MCF 10A (cell line): ENCODE measurements at regions of chr14 and their contacts with region 1.

Region 1: DNA sequence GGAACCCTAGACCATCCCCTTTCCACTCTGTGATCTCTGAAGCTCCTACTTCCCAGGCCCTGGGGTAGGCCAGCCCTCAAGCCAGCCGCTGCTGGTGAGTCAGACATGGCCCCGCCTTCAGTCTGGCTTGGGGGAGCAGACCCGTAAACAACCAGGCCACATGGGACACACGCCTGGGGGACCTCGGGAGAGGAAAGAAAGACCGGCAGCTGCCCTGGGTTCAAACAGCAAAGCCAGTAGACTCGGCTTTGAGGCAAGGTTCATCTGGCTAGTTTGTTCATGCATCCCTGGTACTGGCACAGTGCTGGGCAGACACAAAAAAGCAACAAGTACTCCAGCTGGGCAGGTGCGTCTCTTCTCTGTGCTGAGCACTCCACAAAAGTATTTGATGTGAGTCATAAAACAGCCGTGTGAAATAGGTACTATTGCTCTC is 101.9 kb downstream of the SETD3 start:
- DNase-seq: peak; percentile 72
- H3K4me3 Mint-ChIP-seq: no peak overlapping the region
- H3K27ac Mint-ChIP-seq: no peak overlapping the region
- H3K4me1 Mint-ChIP-seq: peaks cover 26% of the 10 kb centered on the region
- H3K27me3 Mint-ChIP-seq: no peaks in the 10 kb centered on the region
- CTCF ChIP-seq: no peak

Region 2: GRCh38 chr14:98489115-98489514 is 889.7 kb before region 1 on chr14:
- CTCF ChIA-PET with region 1: no interaction called
- POLR2A ChIA-PET with region 1: no interaction called
- intact Hi-C with region 1: no loop called
- DNase-seq: peak; percentile 45
- H3K4me3 Mint-ChIP-seq: no peak overlapping the region
- H3K27ac Mint-ChIP-seq: peak overlapping the region; percentile 46
- H3K4me1 Mint-ChIP-seq: peaks cover 15% of the 10 kb centered on the region
- H3K27me3 Mint-ChIP-seq: no peaks in the 10 kb centered on the region
- CTCF ChIP-seq: no peak

Region 3: GRCh38 chr14:99320105-99320572 is 58.7 kb before region 1 on chr14:
- CTCF ChIA-PET with region 1: interaction called, 13 read pairs
- POLR2A ChIA-PET with region 1: no interaction called
- intact Hi-C with region 1: no loop called
- DNase-seq: peak; percentile 65
- H3K4me3 Mint-ChIP-seq: no peak overlapping the region
- H3K27ac Mint-ChIP-seq: no peak overlapping the region
- H3K4me1 Mint-ChIP-seq: peaks cover 6% of the 10 kb centered on the region
- H3K27me3 Mint-ChIP-seq: no peaks in the 10 kb centered on the region
- CTCF ChIP-seq: peak; percentile 89

Region 4: GRCh38 chr14:99357916-99358390 is 20.8 kb before region 1 on chr14:
- CTCF ChIA-PET with region 1: no interaction called
- POLR2A ChIA-PET with region 1: no interaction called
- intact Hi-C with region 1: no loop called
- DNase-seq: no peak
- H3K4me3 Mint-ChIP-seq: no peak overlapping the region
- H3K27ac Mint-ChIP-seq: no peak overlapping the region
- H3K4me1 Mint-ChIP-seq: no peaks in the 10 kb centered on the region
- H3K27me3 Mint-ChIP-seq: no peaks in the 10 kb centered on the region
- CTCF ChIP-seq: no peak

Region 5: DNA sequence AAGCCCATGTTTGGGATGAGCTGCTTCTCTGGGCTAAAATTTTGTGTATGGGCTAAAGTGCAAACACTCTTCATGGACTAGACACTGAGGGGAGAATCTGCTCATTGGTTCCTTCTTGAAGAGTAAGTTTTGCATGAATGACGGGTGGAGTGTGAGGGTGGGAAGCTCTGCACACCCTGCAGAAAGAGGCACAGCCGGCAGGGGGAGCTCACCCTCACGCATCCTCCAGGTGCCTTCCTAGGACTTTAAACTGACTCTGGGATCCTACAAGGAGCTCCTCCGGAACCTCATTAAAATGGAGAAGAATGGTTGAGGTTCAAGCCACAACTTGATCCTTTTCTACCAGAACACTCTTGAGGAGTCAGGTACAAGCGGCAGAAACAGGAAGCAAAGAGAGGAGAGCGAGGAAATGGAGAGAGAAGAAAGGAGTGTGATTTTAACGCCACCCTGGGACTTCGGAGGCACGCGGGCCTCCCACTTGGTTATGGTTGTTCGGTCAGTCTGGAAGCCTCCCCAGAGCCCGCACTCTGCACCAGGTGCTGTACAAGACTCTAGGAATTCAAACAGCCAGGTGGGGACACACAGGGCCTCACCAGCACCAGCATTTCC is 14.4 kb after region 1 on chr14:
- CTCF ChIA-PET with region 1: interaction called, 29 read pairs
- POLR2A ChIA-PET with region 1: interaction called, 4 read pairs
- intact Hi-C with region 1: no loop called
- DNase-seq: peak; percentile 54
- H3K4me3 Mint-ChIP-seq: no peak overlapping the region
- H3K27ac Mint-ChIP-seq: no peak overlapping the region
- H3K4me1 Mint-ChIP-seq: no peaks in the 10 kb centered on the region
- H3K27me3 Mint-ChIP-seq: no peaks in the 10 kb centered on the region
- CTCF ChIP-seq: peak; percentile 59

Region 6: GRCh38 chr14:99475179-99475578 is 96.4 kb after region 1 on chr14:
- CTCF ChIA-PET with region 1: no interaction called
- POLR2A ChIA-PET with region 1: no interaction called
- intact Hi-C with region 1: no loop called
- DNase-seq: no peak
- H3K4me3 Mint-ChIP-seq: no peak overlapping the region
- H3K27ac Mint-ChIP-seq: no peak overlapping the region
- H3K4me1 Mint-ChIP-seq: peaks cover 28% of the 10 kb centered on the region
- H3K27me3 Mint-ChIP-seq: no peaks in the 10 kb centered on the region
- CTCF ChIP-seq: no peak